AG04450 (cell line): ENCODE measurements at regions of chr19 and their contacts with region 1.

Region 1: GRCh38 chr19:16771618-16772017 is 52.0 kb downstream of the NWD1 start:
- DNase-seq: peak; percentile 58
- H3K4me3 ChIP-seq: no peak overlapping the region
- H3K27ac ChIP-seq: no peak overlapping the region
- H3K27me3 ChIP-seq: peaks cover 12% of the 10 kb centered on the region
- CTCF ChIP-seq: peak; percentile 84

Region 2: GRCh38 chr19:16649734-16650133 is 121.9 kb before region 1 on chr19:
- CTCF ChIA-PET with region 1: interaction called, 10 read pairs
- POLR2A ChIA-PET with region 1: no interaction called
- DNase-seq: no peak
- H3K4me3 ChIP-seq: no peak overlapping the region
- H3K27ac ChIP-seq: no peak overlapping the region
- H3K27me3 ChIP-seq: no peaks in the 10 kb centered on the region
- CTCF ChIP-seq: no peak

Region 3: GRCh38 chr19:16790051-16790450 is 18.4 kb after region 1 on chr19:
- CTCF ChIA-PET with region 1: interaction called, 12 read pairs
- POLR2A ChIA-PET with region 1: no interaction called
- DNase-seq: no peak
- H3K4me3 ChIP-seq: no peak overlapping the region
- H3K27ac ChIP-seq: no peak overlapping the region
- H3K27me3 ChIP-seq: no peaks in the 10 kb centered on the region
- CTCF ChIP-seq: no peak

Region 4: GRCh38 chr19:16801596-16801995 is 30.0 kb after region 1 on chr19:
- CTCF ChIA-PET with region 1: interaction called, 15 read pairs
- POLR2A ChIA-PET with region 1: no interaction called
- DNase-seq: no peak
- H3K4me3 ChIP-seq: no peak overlapping the region
- H3K27ac ChIP-seq: no peak overlapping the region
- H3K27me3 ChIP-seq: no peaks in the 10 kb centered on the region
- CTCF ChIP-seq: no peak

Region 5: GRCh38 chr19:17005000-17005399 is 233.4 kb after region 1 on chr19:
- CTCF ChIA-PET with region 1: no interaction called
- POLR2A ChIA-PET with region 1: no interaction called
- DNase-seq: no peak
- H3K4me3 ChIP-seq: no peak overlapping the region
- H3K27ac ChIP-seq: no peak overlapping the region
- H3K27me3 ChIP-seq: no peaks in the 10 kb centered on the region
- CTCF ChIP-seq: peak; percentile 5; the same call in 1 of the 2 replicates

Region 6: GRCh38 chr19:17041976-17042375 is 270.4 kb after region 1 on chr19:
- CTCF ChIA-PET with region 1: interaction called, 11 read pairs
- POLR2A ChIA-PET with region 1: no interaction called
- DNase-seq: no peak
- H3K4me3 ChIP-seq: no peak overlapping the region
- H3K27ac ChIP-seq: no peak overlapping the region
- H3K27me3 ChIP-seq: peaks cover 12% of the 10 kb centered on the region
- CTCF ChIP-seq: no peak

Region 7: DNA sequence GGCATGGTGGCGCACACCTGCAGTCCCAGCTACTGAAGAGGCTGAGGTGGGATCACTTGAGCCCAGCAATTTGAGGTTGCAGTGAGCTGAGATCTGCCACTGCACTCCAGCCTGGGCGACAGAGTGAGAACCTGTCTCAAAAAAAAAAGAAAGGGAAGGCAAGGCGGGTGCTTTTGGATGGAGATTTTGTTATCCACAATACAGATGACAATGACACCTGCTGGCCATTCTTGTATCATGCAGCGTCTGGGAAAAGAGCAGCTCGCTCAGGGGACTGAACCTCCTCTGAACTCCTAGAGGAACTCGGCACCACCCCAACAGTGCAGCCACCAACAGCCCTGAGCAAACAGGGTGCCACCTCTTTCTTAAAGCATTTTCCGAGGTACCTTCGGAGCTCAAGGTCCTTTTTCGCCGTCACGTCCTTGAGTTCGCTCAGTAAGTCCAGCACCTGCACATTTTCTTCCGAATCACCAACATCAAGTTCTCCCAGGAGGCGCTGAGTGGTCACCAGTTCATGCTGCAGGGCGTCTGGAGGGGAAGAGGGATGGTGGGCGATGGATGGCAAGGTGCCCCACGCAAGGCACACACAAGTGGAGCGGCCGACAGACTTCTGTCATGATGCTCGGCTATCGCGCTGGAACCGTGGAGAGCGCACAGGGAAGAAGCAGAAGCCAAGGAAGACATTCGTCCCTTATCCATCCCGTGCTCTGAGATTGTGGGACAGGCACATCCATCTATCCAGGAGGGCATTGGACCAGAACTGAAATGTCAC is 281.0 kb after region 1 on chr19:
- CTCF ChIA-PET with region 1: interaction called, 66 read pairs
- POLR2A ChIA-PET with region 1: no interaction called
- DNase-seq: no peak
- H3K4me3 ChIP-seq: no peak overlapping the region
- H3K27ac ChIP-seq: no peak overlapping the region
- H3K27me3 ChIP-seq: no peaks in the 10 kb centered on the region
- CTCF ChIP-seq: peak; percentile 74

Region 8: GRCh38 chr19:17305517-17306284 is 534.1 kb after region 1 on chr19 and contains the start of gene MRPL34:
- CTCF ChIA-PET with region 1: interaction called, 14 read pairs
- POLR2A ChIA-PET with region 1: no interaction called
- DNase-seq: peak; percentile 99
- H3K4me3 ChIP-seq: peak within 1 kb of the TSS; percentile 81
- H3K27ac ChIP-seq: peak within 1 kb of the TSS; percentile 77
- H3K27me3 ChIP-seq: no peaks in the 10 kb centered on the region
- CTCF ChIP-seq: peak; percentile 82
- polyA plus RNA-seq, gene MRPL34: 23.2 and 24.3 TPM in 2 replicates